ENCODE measurements at regions of chr2 and their contacts with region 1.

Region 1: GRCh38 chr2:168047091-168047690 is 200.2 kb downstream of the STK39 start:
- DNase-seq: no peak
- ATAC-seq: no peak
- H3K4me3 ChIP-seq: no peak overlapping the region
- H3K4me3 Mint-ChIP-seq: no peak overlapping the region
- H3K27ac ChIP-seq: no peak overlapping the region
- H3K27ac Mint-ChIP-seq: no peak overlapping the region
- H3K4me1 ChIP-seq: no peaks in the 10 kb centered on the region
- H3K4me1 Mint-ChIP-seq: peaks cover 14% of the 10 kb centered on the region
- H3K27me3 ChIP-seq: no peaks in the 10 kb centered on the region
- H3K27me3 Mint-ChIP-seq: no peaks in the 10 kb centered on the region
- CTCF ChIP-seq: no peak

Region 2: GRCh38 chr2:166803373-166804000 is 1243.7 kb before region 1 on chr2:
- CTCF ChIA-PET with region 1: no interaction called
- POLR2A ChIA-PET with region 1: no interaction called
- intact Hi-C with region 1: loop called in 1 of 2 experiments (anchors 5 kb)
- DNase-seq: peak in 3 of 14 experiments; percentile 11 to 19 (median 12)
- ATAC-seq: peak; percentile 49
- H3K4me3 ChIP-seq: no peak overlapping the region
- H3K4me3 Mint-ChIP-seq: peak overlapping the region; percentile 65
- H3K27ac ChIP-seq: no peak overlapping the region
- H3K27ac Mint-ChIP-seq: peak overlapping the region; percentile 71
- H3K4me1 ChIP-seq: peaks cover 4% of the 10 kb centered on the region
- H3K4me1 Mint-ChIP-seq: peaks cover 42% of the 10 kb centered on the region
- H3K27me3 ChIP-seq: no peaks in the 10 kb centered on the region
- H3K27me3 Mint-ChIP-seq: no peaks in the 10 kb centered on the region
- CTCF ChIP-seq: no peak